A549 (cell line): ENCODE measurements at regions of chr4 and their contacts with region 1.

Region 1: DNA sequence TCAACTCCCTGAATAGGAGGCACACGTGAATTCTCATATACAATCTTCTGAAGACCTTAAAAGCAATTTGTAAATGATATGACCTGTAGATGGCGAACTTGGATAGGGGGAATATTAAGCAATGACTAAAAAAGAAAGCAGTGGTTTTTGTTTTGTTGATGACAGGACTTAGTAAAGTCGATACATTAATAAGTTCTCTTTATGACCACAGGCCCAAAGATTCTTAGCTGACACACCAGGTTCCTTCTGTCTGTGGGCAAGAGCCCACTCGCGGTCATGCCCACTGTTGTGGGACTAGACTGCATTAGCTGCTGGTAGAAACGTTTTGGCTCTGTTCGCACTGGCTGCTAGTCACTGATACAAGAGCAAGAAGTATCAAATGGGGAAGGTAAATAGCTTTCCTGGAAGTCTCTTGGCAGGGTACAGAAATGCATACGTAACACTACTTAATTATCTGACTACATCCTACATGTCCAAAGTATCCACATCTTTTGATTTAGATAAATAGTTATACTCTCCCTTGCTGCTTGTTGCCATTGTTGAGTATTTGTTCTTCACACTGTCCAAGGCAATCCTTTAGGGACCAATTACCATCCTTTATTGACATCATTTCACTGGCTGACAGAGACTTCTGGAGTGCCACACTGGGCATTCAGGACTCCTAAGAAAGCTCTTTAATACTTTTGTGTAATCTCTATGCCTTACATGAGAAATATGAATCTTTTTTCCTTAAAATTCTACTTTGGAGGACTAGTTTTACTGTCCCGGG is 31.0 kb downstream of the ALPK1 start:
- DNase-seq: peak in 1 of 2 experiments; percentile 27
- ATAC-seq: peak; percentile 43 to 47; a peak in 1 of 6 replicates
- H3K4me3 ChIP-seq: no peak overlapping the region
- H3K27ac ChIP-seq: no peak overlapping the region
- H3K4me1 ChIP-seq: no peaks in the 10 kb centered on the region
- CTCF ChIP-seq: peak; percentile 51
- EP300 ChIP-seq: no peak
- POLR2A ChIP-seq: no peak
- RAD21 ChIP-seq: peak; percentile 63 to 67

Region 2: DNA sequence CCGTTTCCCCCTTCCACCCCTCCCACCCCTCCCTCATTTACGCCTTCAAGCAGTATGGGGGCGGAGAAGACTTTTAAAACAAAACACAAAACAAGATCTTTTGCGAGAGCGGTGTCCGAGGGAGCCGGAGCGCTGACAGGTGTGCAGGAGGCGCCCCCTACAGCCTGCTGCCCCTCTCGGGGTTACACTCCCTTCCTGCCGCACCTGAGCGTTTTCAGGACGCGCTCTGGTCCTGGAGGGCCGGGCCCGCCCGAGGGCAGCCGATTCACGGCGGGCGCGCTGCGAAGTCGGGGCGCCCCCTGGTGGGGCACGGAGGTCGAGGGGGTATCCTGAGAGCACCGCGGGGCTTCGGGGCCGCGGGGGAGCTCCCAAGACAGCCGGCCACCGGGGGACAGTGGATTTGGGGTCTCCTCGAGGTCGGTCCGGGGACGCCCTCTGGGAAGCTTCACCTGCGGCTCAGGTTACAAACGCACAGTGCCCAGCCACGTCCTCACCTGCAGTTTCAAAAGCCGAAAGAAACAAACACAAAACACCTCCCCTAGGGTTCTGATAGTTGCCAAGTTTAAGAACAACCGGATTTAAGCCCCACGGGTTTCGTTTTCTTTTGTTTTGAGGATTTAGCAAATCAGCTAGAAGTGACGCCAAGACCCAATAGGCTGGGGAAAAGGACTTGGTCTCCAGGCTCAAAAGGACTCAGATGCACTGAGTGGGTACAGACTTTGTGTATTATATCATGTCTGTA is 195.8 kb after region 1 on chr4:
- CTCF ChIA-PET with region 1: interaction called, 36 read pairs
- POLR2A ChIA-PET with region 1: no interaction called
- DNase-seq: peak; percentile 30 to 54
- ATAC-seq: peak; percentile 89 to 97
- H3K4me3 ChIP-seq: peak overlapping the region; percentile 55
- H3K27ac ChIP-seq: peak overlapping the region in 1 of 2 experiments; percentile 41; a peak in 1 of 6 replicates
- H3K4me1 ChIP-seq: no peaks in the 10 kb centered on the region
- CTCF ChIP-seq: peak; percentile 72
- EP300 ChIP-seq: no peak
- POLR2A ChIP-seq: no peak
- RAD21 ChIP-seq: peak; percentile 59 to 79

Region 3: GRCh38 chr4:112604589-112604988 is 276.4 kb after region 1 on chr4:
- CTCF ChIA-PET with region 1: interaction called, 69 read pairs
- POLR2A ChIA-PET with region 1: no interaction called
- DNase-seq: peak; percentile 37 to 48
- ATAC-seq: peak; percentile 80 to 88
- H3K4me3 ChIP-seq: no peak overlapping the region
- H3K27ac ChIP-seq: no peak overlapping the region
- H3K4me1 ChIP-seq: no peaks in the 10 kb centered on the region
- CTCF ChIP-seq: peak; percentile 61
- EP300 ChIP-seq: no peak
- POLR2A ChIP-seq: no peak
- RAD21 ChIP-seq: peak; percentile 57 to 62